GM12878 (cell line): ENCODE measurements at regions of chr3 and their contacts with region 1.

Region 1: GRCh38 chr3:52056968-52057805 is 816 bp upstream of the DUSP7 start:
- DNase-seq: peak; percentile 90
- ATAC-seq: peak; percentile 85
- H3K4me3 ChIP-seq: peak overlapping the region; percentile 73
- H3K27ac ChIP-seq: peak overlapping the region; percentile 83
- H3K4me1 ChIP-seq: peaks cover 33% of the 10 kb centered on the region
- H3K27me3 ChIP-seq: no peaks in the 10 kb centered on the region
- CTCF ChIP-seq: peak in 1 of 3 experiments; percentile 12; a peak in 1 of 6 replicates
- EP300 ChIP-seq: no peak
- POLR2A ChIP-seq: peak; percentile 56; the same call in 1 of the 2 replicates
- RAD21 ChIP-seq: no peak

Region 2: GRCh38 chr3:51941798-51942602 is 115.2 kb before region 1 on chr3 and contains the starts of genes PARP3 and RRP9:
- CTCF ChIA-PET with region 1: interaction called, 17 read pairs
- POLR2A ChIA-PET with region 1: interaction called, 5 read pairs
- RAD21 ChIA-PET with region 1: interaction called, 17 read pairs
- SMC1A ChIA-PET with region 1: interaction called, 6 read pairs
- in situ Hi-C with region 1: no loop called
- intact Hi-C with region 1: no loop called
- DNase-seq: peak; percentile 99
- ATAC-seq: peak; percentile 92
- H3K4me3 ChIP-seq: peak within 1 kb of the TSS; percentile 96
- H3K27ac ChIP-seq: peak within 1 kb of the TSS; percentile 98
- H3K4me1 ChIP-seq: peaks cover 11% of the 10 kb centered on the region
- H3K27me3 ChIP-seq: no peaks in the 10 kb centered on the region
- CTCF ChIP-seq: peak; percentile 99 to 100 (median 99); a peak in 5 of 6 replicates
- EP300 ChIP-seq: peak in 1 of 2 experiments; percentile 38; a peak in 1 of 4 replicates
- POLR2A ChIP-seq: peak; percentile 91
- RAD21 ChIP-seq: peak; percentile 83
- polyA plus RNA-seq, gene PARP3: 2.1 to 2.2 TPM
- polyA plus RNA-seq, gene RRP9: 4.7 to 10.6 TPM

Region 3: DNA sequence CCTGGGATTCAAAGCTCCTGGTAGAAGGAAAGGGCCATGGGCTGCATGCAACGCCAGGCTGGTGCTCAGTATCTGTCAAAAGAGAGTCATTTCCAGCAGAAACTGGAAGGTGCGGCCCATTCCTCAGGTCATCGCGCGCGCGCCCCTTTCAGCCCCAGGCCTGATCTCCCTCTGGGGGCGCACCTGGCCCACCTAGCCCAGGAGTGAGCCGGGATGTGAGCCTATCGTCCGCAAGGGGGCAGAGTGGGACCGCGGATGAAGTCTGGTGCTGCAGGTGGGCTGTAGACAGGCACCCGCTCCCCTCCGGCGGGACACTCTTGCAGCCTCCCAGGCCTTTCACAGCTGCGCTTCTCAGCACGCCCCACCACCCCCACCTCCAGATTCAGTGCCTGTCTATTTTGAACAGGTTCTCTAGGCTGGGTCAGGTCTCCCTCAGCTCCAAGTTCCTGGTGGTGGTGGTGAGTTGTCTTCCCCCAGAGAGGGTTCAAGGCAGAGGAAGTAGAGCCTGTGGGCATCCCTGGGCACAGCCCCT is 55.7 kb before region 1 on chr3:
- CTCF ChIA-PET with region 1: interaction called, 334 read pairs
- POLR2A ChIA-PET with region 1: interaction called, 6 read pairs
- RAD21 ChIA-PET with region 1: interaction called, 165 read pairs
- SMC1A ChIA-PET with region 1: interaction called, 179 read pairs
- in situ Hi-C with region 1: no loop called
- intact Hi-C with region 1: loop called (anchors 1 kb)
- DNase-seq: no peak
- ATAC-seq: peak; percentile 97
- H3K4me3 ChIP-seq: no peak overlapping the region
- H3K27ac ChIP-seq: no peak overlapping the region
- H3K4me1 ChIP-seq: peaks cover 12% of the 10 kb centered on the region
- H3K27me3 ChIP-seq: no peaks in the 10 kb centered on the region; a peak in 2 of 4 replicates
- CTCF ChIP-seq: peak; percentile 98 to 99 (median 98)
- EP300 ChIP-seq: no peak
- POLR2A ChIP-seq: no peak
- RAD21 ChIP-seq: peak; percentile 97

Region 4: DNA sequence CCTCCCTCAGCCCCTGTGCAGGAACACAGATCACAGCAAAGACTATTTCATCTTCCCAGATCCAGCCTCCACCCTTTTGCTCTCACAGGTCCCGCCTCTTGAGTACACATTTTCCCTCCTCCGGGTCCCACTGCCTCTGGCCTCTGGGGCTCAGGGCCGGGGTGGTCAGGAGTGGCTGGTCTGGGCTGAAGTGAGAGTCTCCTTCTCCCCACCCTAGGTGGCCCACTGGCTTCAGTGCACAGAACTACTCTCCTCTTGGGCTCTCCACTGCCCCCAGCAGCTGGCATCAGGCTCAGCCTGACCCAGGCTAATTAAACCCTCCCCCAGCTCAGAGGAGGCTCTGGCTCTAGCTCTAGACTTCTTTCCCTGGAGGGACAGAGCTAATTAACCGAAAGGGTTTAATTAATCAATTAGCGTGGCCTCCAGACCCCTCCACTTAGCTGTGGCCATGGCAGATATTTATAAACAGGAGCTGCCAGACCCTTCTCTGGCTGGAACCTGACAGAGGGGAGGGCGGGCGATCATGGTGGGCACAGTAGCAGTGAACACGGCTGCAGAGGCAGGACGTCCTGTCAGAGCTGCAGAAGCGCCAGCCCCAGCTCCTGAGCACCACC is 16.0 kb before region 1 on chr3:
- CTCF ChIA-PET with region 1: interaction called, 41 read pairs
- POLR2A ChIA-PET with region 1: interaction called, 17 read pairs
- RAD21 ChIA-PET with region 1: interaction called, 48 read pairs
- SMC1A ChIA-PET with region 1: interaction called, 37 read pairs
- in situ Hi-C with region 1: no loop called
- intact Hi-C with region 1: no loop called
- DNase-seq: no peak
- ATAC-seq: peak; percentile 62
- H3K4me3 ChIP-seq: no peak overlapping the region
- H3K27ac ChIP-seq: no peak overlapping the region
- H3K4me1 ChIP-seq: peaks cover 2% of the 10 kb centered on the region; the same call in 1 of the 2 replicates
- H3K27me3 ChIP-seq: no peaks in the 10 kb centered on the region
- CTCF ChIP-seq: peak in 2 of 3 experiments; percentile 34 to 38; a peak in 3 of 6 replicates
- EP300 ChIP-seq: no peak
- POLR2A ChIP-seq: no peak
- RAD21 ChIP-seq: no peak

Region 5: DNA sequence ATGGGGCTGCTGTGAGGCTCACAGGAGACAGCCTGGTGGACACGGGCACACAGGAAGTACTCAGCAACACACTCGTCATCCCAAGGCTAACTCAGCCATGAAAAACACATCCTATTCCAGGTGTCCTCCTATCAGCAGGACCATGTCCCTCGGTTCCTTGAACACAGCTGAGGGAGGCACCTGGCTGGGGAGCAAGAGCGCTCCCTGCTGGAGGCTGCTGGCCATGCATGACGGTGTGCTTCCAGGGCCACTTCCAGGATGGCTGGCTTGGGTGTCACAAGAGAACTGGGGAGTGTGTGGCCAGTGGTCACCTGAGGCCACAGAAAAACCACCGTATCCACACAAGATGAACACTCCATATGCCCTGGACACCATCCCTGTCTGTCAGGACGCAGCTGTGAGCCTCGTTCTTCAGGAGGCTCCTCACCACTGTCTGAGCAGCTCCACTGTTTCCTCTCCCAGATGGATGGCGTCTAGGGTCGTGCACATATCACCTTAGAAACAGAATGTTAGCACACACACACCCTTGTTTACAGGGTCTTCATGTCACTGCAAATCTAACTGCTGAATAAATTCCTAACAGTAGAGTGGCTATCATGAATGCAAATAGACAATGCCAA is 66.0 kb after region 1 on chr3:
- CTCF ChIA-PET with region 1: interaction called, 200 read pairs
- POLR2A ChIA-PET with region 1: interaction called, 5 read pairs
- RAD21 ChIA-PET with region 1: interaction called, 102 read pairs
- SMC1A ChIA-PET with region 1: interaction called, 62 read pairs
- in situ Hi-C with region 1: no loop called
- intact Hi-C with region 1: loop called (anchors 1 kb)
- DNase-seq: no peak
- ATAC-seq: peak; percentile 91
- H3K4me3 ChIP-seq: no peak overlapping the region
- H3K27ac ChIP-seq: 0 out of 2 replicates have a peak overlapping the region, but pooled peaks have one; percentile 13
- H3K4me1 ChIP-seq: peaks cover 32% of the 10 kb centered on the region
- H3K27me3 ChIP-seq: no peaks in the 10 kb centered on the region
- CTCF ChIP-seq: peak; percentile 95 to 97 (median 97); a peak in 5 of 6 replicates
- EP300 ChIP-seq: no peak
- POLR2A ChIP-seq: no peak
- RAD21 ChIP-seq: peak; percentile 96

Region 6: GRCh38 chr3:52154117-52155094 is 97.2 kb after region 1 on chr3 and contains the start of gene POC1A:
- CTCF ChIA-PET with region 1: interaction called, 26 read pairs
- POLR2A ChIA-PET with region 1: interaction called, 7 read pairs
- RAD21 ChIA-PET with region 1: interaction called, 13 read pairs
- SMC1A ChIA-PET with region 1: interaction called, 10 read pairs
- in situ Hi-C with region 1: no loop called
- intact Hi-C with region 1: no loop called
- DNase-seq: peak; percentile 86
- ATAC-seq: peak; percentile 92
- H3K4me3 ChIP-seq: peak within 1 kb of the TSS; percentile 76
- H3K27ac ChIP-seq: peak within 1 kb of the TSS; percentile 75
- H3K4me1 ChIP-seq: peaks cover 7% of the 10 kb centered on the region
- H3K27me3 ChIP-seq: no peaks in the 10 kb centered on the region
- CTCF ChIP-seq: no peak
- EP300 ChIP-seq: 0 out of 4 replicates have a peak, but pooled peaks of 1 of the 2 experiments have one; percentile 11
- POLR2A ChIP-seq: peak; percentile 75
- RAD21 ChIP-seq: no peak
- polyA plus RNA-seq, gene POC1A: 8.5 to 13.0 TPM

Region 7: DNA sequence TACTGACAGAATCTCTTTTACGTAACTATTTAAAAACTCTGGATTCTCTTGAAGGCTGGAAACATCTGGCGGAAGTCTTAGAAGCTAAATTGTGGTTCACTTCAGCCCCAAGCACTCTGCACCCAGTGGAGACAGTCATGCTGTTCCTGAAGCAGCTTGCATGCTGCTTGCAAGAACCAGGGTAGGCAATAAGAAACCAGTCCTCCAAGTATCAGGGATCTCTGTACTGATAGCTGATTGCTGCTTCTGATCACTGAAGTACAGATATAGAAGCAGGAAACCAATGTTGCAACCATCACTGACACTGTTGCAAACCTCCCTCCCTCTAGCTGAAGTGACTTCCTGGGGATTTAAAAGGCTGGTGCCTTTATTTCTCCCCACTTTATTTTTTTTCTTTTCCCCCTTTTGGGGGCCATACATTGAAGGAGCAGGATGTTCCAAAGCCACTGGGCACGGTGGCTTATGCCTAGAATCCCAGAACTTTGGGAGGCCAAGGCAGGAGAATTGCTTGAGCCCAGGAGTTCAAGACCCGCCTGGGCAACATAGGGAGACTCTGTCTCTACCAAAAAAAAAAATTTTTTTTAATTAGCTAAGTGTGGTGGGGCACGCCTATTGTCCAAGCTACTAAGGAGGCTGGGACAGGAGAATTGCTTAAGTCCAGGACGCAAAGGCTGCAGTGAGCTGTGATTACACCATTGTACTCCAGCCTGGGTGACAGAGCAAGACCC is 664.0 kb after region 1 on chr3:
- CTCF ChIA-PET with region 1: no interaction called
- POLR2A ChIA-PET with region 1: no interaction called
- RAD21 ChIA-PET with region 1: no interaction called
- SMC1A ChIA-PET with region 1: no interaction called
- in situ Hi-C with region 1: no loop called
- intact Hi-C with region 1: no loop called
- DNase-seq: no peak
- ATAC-seq: peak; percentile 71
- H3K4me3 ChIP-seq: no peak overlapping the region
- H3K27ac ChIP-seq: peak overlapping the region; percentile 27
- H3K4me1 ChIP-seq: peaks cover 27% of the 10 kb centered on the region
- H3K27me3 ChIP-seq: no peaks in the 10 kb centered on the region
- CTCF ChIP-seq: no peak
- EP300 ChIP-seq: no peak
- POLR2A ChIP-seq: no peak
- RAD21 ChIP-seq: no peak